ENCODE measurements at regions of chr2 and their contacts with region 1.

Region 1: DNA sequence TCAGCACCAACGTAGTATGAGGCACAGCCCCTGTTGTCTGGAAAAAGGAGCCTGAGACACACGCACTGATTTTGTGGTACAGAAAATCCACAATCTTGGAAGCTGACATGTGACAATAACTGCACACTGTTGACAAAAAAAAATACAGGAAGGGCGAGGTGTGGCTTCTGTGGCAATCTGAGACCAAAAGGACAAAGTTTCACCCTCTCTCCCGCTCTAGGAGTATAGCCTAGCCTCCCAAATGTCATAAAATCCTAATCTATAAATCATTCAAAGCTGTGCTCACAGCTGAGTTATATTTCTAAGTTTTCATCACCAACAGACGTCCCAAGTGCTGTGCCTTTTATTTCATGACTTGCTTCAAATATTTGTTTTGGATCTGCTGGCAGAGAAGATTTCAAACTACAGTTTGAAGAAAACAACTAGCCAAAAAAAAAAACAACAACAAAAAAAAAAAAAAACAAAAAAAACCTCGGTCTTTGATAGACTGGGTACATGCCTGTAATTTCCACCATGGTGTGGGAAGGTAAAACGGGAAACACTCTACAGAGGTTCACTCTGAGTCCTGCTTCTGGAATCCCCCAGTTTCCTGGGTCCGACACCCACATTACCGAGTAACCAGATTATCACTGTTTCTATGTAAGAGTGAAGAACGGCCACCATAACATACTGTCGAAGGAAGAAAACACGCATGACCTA is 61.0 kb downstream of the C2orf76 start:
- DNase-seq: no peak
- ATAC-seq: no peak
- H3K4me3 ChIP-seq: no peak overlapping the region
- H3K27ac ChIP-seq: no peak overlapping the region
- H3K4me1 ChIP-seq: no peaks in the 10 kb centered on the region
- H3K27me3 ChIP-seq: no peaks in the 10 kb centered on the region
- CTCF ChIP-seq: no peak
- EP300 ChIP-seq: no peak
- POLR2A ChIP-seq: no peak
- RAD21 ChIP-seq: no peak

Region 2: GRCh38 chr2:119028327-119029174 is 277.1 kb before region 1 on chr2:
- CTCF ChIA-PET with region 1: interaction called, 5 read pairs
- POLR2A ChIA-PET with region 1: no interaction called
- RAD21 ChIA-PET with region 1: no interaction called
- SMC1A ChIA-PET with region 1: no interaction called
- in situ Hi-C with region 1: no loop called
- intact Hi-C with region 1: loop called (anchors 5 kb)
- DNase-seq: no peak
- ATAC-seq: peak; percentile 59
- H3K4me3 ChIP-seq: no peak overlapping the region
- H3K27ac ChIP-seq: no peak overlapping the region
- H3K4me1 ChIP-seq: no peaks in the 10 kb centered on the region
- H3K27me3 ChIP-seq: no peaks in the 10 kb centered on the region; a peak in 2 of 4 replicates
- CTCF ChIP-seq: peak; percentile 45 to 62 (median 50); a peak in 5 of 6 replicates
- EP300 ChIP-seq: no peak
- POLR2A ChIP-seq: no peak
- RAD21 ChIP-seq: peak; percentile 42

Region 3: GRCh38 chr2:119544075-119544938 is 238.7 kb after region 1 on chr2 and contains the start of gene CFAP221:
- CTCF ChIA-PET with region 1: no interaction called
- POLR2A ChIA-PET with region 1: no interaction called
- RAD21 ChIA-PET with region 1: no interaction called
- SMC1A ChIA-PET with region 1: no interaction called
- in situ Hi-C with region 1: no loop called
- intact Hi-C with region 1: no loop called
- DNase-seq: no peak
- ATAC-seq: peak; percentile 48
- H3K4me3 ChIP-seq: no peak within 1 kb of the TSS
- H3K27ac ChIP-seq: no peak within 1 kb of the TSS
- H3K4me1 ChIP-seq: no peaks in the 10 kb centered on the region
- H3K27me3 ChIP-seq: peaks cover 0 to 5% of the 10 kb centered on the region in 2 experiments; a peak in 3 of 4 replicates
- CTCF ChIP-seq: no peak
- EP300 ChIP-seq: no peak
- POLR2A ChIP-seq: no peak
- RAD21 ChIP-seq: no peak
- polyA plus RNA-seq, gene CFAP221: not detected

Region 4: GRCh38 chr2:120907812-120908211 is 1602.2 kb after region 1 on chr2:
- CTCF ChIA-PET with region 1: no interaction called
- POLR2A ChIA-PET with region 1: no interaction called
- RAD21 ChIA-PET with region 1: no interaction called
- SMC1A ChIA-PET with region 1: no interaction called
- in situ Hi-C with region 1: no loop called
- intact Hi-C with region 1: no loop called
- DNase-seq: no peak
- ATAC-seq: no peak
- H3K4me3 ChIP-seq: no peak overlapping the region
- H3K27ac ChIP-seq: no peak overlapping the region
- H3K4me1 ChIP-seq: no peaks in the 10 kb centered on the region
- H3K27me3 ChIP-seq: peaks cover 0 to 4% of the 10 kb centered on the region in 2 experiments; a peak in 3 of 4 replicates
- CTCF ChIP-seq: no peak
- EP300 ChIP-seq: no peak
- POLR2A ChIP-seq: no peak
- RAD21 ChIP-seq: no peak

Measured in GM12878 (cell line).